Stomach (tissue), 19 donors: ENCODE measurements at regions of chr22 and their contacts with region 1.

Region 1: GRCh38 chr22:43993027-43993760 is 30.9 kb upstream of the PARVB start:
- DNase-seq: peak; percentile 54 to 80
- H3K4me3 ChIP-seq: no peak overlapping the region
- H3K27ac ChIP-seq: no peak overlapping the region
- H3K4me1 ChIP-seq: peaks cover 0 to 3% (median 0%) of the 10 kb centered on the region in 4 donors
- H3K27me3 ChIP-seq: no peaks in the 10 kb centered on the region
- CTCF ChIP-seq: peak in 5 of 7 experiments; percentile 83 to 96 (median 93)
- EP300 ChIP-seq: no peak
- POLR2A ChIP-seq: no peak

Region 2: DNA sequence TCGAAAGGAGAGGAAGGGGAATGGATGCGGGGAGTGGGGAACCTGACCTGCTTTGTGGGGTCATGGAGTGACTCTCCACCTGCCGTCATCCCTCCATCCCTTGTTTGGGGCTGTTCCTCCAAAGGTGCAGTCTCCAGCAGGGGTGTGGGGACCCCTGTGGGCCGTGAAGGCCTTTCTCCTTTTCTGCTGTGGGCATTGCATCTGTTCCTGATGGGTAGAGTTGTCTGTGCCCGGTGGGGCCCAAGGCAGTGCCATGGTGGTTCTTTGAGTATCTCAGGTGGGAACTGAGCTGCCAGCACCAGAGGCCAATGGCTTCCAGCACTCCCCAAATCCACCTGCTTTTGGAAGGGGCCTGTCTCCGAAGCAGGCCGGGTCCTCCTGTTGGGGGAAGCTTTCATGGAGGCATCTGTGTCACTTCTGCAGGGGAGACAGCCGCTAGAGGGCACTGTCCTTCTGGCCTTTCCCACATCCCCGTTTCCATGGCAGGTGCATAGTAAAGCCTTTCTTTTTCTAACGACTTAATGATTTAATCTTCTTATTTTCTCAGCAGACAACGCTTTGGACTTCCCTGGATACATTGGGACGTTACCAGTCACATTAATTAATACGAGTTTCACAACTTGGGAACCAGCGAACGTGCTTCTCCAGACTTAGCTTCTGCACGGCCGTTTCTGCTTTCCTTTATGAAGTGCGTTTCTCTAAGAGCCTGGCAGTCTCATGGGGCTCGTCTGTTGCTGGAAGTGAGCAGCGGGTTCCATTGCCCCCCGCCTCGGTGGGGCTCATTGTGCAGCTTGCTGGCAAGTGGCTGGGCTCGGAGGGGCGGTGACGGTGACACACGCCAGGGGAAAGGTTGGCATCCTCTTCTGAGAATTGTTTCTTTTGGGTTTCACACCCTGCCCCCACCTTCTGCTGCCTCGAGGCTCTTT is 88.0 kb after region 1 on chr22:
- intact Hi-C with region 1: loop called (anchors 10 kb)
- DNase-seq: peak; percentile 79 to 92
- H3K4me3 ChIP-seq: peak overlapping the region in 1 of 4 donors; percentile 19
- H3K27ac ChIP-seq: peak overlapping the region in 1 of 5 donors; percentile 16
- H3K4me1 ChIP-seq: peaks cover 0 to 17% (median 8%) of the 10 kb centered on the region in 4 donors
- H3K27me3 ChIP-seq: no peaks in the 10 kb centered on the region
- CTCF ChIP-seq: peak in 5 of 7 experiments; percentile 64 to 89 (median 80)
- EP300 ChIP-seq: no peak
- POLR2A ChIP-seq: no peak

Region 3: GRCh38 chr22:44625981-44626687 is 632.9 kb after region 1 on chr22:
- intact Hi-C with region 1: loop called (anchors 5 kb)
- DNase-seq: peak; percentile 79 to 89
- H3K4me3 ChIP-seq: no peak overlapping the region
- H3K27ac ChIP-seq: no peak overlapping the region
- H3K4me1 ChIP-seq: peaks cover 0 to 5% (median 2%) of the 10 kb centered on the region in 4 donors
- H3K27me3 ChIP-seq: peaks cover 0 to 68% (median 22%) of the 10 kb centered on the region in 3 donors
- CTCF ChIP-seq: peak in 6 of 7 experiments; percentile 82 to 100 (median 98)
- EP300 ChIP-seq: no peak
- POLR2A ChIP-seq: no peak